Heart left ventricle (tissue), 16 donors: ENCODE measurements at regions of chr1 and their contacts with region 1.

Region 1: GRCh38 chr1:153220606-153221303 is 3.4 kb downstream of the PRR9 start:
- DNase-seq: no peak
- ATAC-seq: no peak
- H3K4me3 ChIP-seq: no peak overlapping the region
- H3K27ac ChIP-seq: no peak overlapping the region
- H3K4me1 ChIP-seq: no peaks in the 10 kb centered on the region
- H3K27me3 ChIP-seq: peaks cover 0 to 17% (median 0%) of the 10 kb centered on the region in 9 donors
- CTCF ChIP-seq: no peak
- POLR2A ChIP-seq: no peak

Region 2: DNA sequence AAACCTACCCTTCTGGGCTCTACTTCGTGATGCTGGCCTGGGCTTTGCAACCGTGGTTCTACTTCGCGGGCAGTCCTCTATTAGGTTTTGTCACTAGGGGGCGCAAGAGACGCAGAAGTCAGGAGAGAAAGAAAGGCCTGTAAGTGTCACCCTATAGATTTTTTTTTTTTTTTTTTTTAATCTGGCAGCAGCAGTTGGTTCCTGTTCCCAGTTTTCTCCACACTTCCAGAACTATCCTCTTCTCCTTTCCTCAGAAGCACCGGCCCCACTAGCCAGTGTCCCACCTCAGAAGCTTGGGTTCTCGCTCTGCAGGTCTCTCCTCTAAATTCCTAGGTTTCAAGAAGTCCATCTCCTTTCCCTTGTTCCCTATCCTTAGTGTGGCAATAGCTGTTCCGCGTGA is 566.6 kb before region 1 on chr1:
- intact Hi-C with region 1: loop called in 2 of 10 experiments (anchors 10 kb)
- DNase-seq: no peak
- ATAC-seq: no peak
- H3K4me3 ChIP-seq: no peak overlapping the region
- H3K27ac ChIP-seq: no peak overlapping the region
- H3K4me1 ChIP-seq: no peaks in the 10 kb centered on the region
- H3K27me3 ChIP-seq: peaks cover 0 to 7% (median 0%) of the 10 kb centered on the region in 9 donors
- CTCF ChIP-seq: peak in 10 of 12 donors; percentile 19 to 61 (median 40)
- POLR2A ChIP-seq: no peak

Region 3: DNA sequence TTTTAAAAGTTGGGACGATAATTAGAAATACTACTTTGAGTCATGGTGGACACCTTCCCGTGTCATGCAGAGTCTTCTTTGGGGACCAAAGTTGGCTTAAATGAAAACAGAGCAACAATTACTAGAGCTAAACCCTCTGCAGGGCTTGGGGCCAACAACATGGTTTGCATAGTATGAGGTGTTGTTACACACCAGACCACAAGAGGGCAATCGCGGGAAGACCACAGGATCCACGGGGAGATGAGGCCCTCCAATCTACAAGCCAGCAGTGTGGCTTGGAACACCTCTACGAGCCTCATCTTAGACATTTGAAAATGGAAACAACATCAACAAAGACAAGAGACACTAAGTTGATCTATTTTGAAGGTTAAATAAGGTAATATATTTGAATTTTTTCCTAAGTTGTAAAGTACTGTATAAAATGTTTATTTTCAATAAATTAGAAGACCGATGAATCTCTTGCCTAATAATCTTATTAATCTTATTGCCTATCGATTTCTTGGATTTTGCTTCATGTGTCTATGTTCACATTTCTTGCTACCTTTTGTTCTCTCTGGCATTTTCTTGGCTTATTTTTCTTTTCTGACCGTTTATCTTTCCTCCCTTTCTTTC is 350.8 kb before region 1 on chr1:
- intact Hi-C with region 1: loop called in 6 of 10 experiments (anchors 2 to 10 kb)
- DNase-seq: peak in 4 of 5 donors; percentile 29 to 50 (median 36)
- ATAC-seq: peak in 2 of 4 donors; percentile 42 to 60
- H3K4me3 ChIP-seq: no peak overlapping the region
- H3K27ac ChIP-seq: no peak overlapping the region
- H3K4me1 ChIP-seq: no peaks in the 10 kb centered on the region
- H3K27me3 ChIP-seq: peaks cover 0 to 6% (median 0%) of the 10 kb centered on the region in 9 donors
- CTCF ChIP-seq: peak; percentile 22 to 76 (median 66)
- POLR2A ChIP-seq: no peak

Region 4: DNA sequence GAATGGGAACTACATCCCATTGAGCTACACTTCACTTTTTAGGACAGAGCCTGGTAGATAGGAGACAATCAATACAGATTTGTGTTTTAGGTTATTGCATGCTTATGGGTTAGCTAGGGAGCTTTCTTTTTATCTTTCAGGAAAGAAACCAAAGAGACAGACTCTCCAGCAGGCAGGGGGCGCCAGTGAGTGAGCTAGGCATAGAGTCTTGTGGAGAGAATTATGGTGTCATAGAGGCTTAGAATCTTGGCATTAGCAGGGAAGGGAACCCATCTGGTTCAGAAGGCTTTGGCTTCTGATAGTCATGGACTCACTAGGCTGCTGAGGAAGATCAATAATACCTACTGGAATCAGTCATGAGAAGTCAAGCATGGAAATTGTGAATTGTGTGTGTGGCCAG is 342.7 kb before region 1 on chr1 and contains the start of gene SMCP:
- intact Hi-C with region 1: loop called in 4 of 10 experiments (anchors 5 to 10 kb)
- DNase-seq: no peak
- ATAC-seq: no peak
- H3K4me3 ChIP-seq: no peak within 1 kb of the TSS
- H3K27ac ChIP-seq: no peak within 1 kb of the TSS
- H3K4me1 ChIP-seq: no peaks in the 10 kb centered on the region
- H3K27me3 ChIP-seq: no peaks in the 10 kb centered on the region
- CTCF ChIP-seq: no peak
- POLR2A ChIP-seq: no peak
- total RNA-seq, gene SMCP: not detected